Psoas muscle (tissue), 8 donors: ENCODE measurements at regions of chr3 and their contacts with region 1.

Region 1: GRCh38 chr3:21979706-21980105 is 228.7 kb upstream of the ZNF385D start:
- DNase-seq: no peak
- ATAC-seq: no peak
- H3K4me3 ChIP-seq: no peak overlapping the region
- H3K27ac ChIP-seq: no peak overlapping the region
- H3K4me1 ChIP-seq: no peaks in the 10 kb centered on the region
- H3K27me3 ChIP-seq: no peaks in the 10 kb centered on the region
- CTCF ChIP-seq: no peak

Region 2: DNA sequence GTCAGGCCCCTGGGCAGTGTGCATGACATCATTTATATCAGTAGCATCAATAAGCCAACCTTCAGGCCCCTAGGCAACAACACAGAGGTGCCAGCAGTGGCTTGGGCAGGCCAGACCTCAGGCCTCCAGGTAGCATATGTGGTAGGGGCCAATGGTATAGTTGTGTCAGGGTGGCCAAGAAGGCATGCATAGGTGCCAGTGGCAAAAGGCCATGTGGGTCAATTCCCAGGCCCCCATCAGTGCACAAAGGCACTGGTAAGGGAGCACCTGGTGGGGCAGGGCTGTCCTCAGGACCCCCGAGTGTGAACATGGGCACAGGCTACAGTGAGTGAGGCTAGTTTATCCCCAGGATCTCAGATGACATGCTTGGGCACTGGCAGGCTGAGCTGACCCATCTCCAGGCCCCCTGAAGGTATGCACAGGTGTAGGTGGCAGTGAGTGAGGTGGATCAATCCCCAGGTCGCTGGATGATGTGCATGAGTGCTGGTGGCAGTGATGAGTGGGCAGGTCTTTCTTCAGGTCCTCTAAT is 15.4 kb after region 1 on chr3:
- intact Hi-C with region 1: loop called in 1 of 2 experiments (anchors 2 kb)
- DNase-seq: no peak
- ATAC-seq: no peak
- H3K4me3 ChIP-seq: no peak overlapping the region
- H3K27ac ChIP-seq: no peak overlapping the region
- H3K4me1 ChIP-seq: no peaks in the 10 kb centered on the region
- H3K27me3 ChIP-seq: no peaks in the 10 kb centered on the region
- CTCF ChIP-seq: no peak